ENCODE measurements at regions of chr5 and their contacts with region 1.

Region 1: DNA sequence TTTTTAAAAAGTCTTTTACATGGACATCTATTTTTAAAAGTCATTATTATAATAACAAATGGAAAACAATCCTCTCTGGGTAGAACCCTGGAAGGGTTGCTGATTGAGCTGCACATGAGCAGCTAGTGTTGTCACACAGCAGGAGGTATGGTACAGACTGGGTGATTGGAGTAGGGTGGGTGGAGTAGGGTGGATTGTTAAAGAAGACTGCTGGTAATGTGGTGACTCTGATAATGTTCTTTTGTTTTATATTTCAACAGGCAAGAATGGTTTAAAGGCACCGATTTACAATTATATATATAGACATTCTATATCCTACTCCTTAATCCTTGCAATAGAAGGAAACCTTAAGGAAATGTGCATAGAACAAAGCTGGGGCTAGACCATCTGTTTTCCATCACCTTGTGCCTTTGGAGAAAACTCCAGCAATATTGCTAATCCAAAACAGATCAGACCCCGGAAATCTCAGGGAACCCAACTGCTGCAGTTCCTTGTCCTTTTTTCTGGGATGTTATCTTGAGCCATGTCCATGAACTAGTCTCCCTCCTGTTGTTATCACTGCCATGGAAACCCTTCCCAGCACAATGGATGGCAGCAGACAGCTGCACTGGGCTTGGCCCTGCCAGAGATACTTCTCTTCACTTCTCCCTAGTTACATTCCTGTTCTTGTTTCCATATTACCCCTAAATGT is 129.7 kb downstream of the YIPF5 start:
- DNase-seq: no peak
- ATAC-seq: no peak
- H3K4me3 ChIP-seq: no peak overlapping the region
- H3K27ac ChIP-seq: no peak overlapping the region
- H3K4me1 ChIP-seq: no peaks in the 10 kb centered on the region
- H3K27me3 ChIP-seq: no peaks in the 10 kb centered on the region
- CTCF ChIP-seq: no peak

Region 2: DNA sequence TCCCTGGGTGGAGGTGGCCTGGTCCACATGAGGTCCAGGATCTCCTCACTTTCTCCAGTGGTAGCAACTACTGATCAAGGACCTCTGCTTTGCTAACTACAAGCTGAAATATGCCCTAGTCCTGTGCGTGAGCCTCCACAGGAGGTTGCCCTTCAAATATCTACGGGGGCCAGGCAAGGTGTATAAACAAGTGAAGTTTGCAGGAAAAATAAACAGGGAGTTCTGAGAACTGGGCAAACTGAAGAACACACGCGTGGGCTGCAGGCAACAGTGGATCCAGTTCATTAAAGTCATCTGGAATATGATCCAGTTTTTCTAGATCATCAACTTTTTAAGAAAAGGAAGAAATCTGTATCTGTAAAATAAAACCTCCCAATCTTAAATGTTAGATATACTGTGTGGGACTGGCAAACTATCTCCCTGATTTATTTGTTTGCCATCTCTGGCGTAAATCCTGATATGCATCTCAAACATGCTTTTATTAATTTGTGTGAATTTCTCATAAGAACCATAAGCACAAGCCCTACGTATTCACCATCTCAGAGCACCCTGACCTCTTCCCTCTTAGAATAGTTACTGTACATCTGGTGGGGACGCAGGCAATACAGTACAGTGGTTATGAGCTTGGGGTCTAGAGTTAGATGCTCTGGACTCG is 469.6 kb before region 1 on chr5:
- CTCF ChIA-PET with region 1: no interaction called
- POLR2A ChIA-PET with region 1: interaction called, 13 read pairs
- intact Hi-C with region 1: no loop called
- DNase-seq: no peak
- ATAC-seq: no peak
- H3K4me3 ChIP-seq: no peak overlapping the region
- H3K27ac ChIP-seq: no peak overlapping the region
- H3K4me1 ChIP-seq: no peaks in the 10 kb centered on the region
- H3K27me3 ChIP-seq: no peaks in the 10 kb centered on the region
- CTCF ChIP-seq: no peak

Measured in PC-3 (cell line).